PC-3 (cell line): ENCODE measurements at regions of chr1 and their contacts with region 1.

Region 1: GRCh38 chr1:13960375-13960987 is 260.5 kb downstream of the PRDM2 start:
- DNase-seq: peak; percentile 84
- ATAC-seq: peak; percentile 84
- H3K4me3 ChIP-seq: no peak overlapping the region
- H3K27ac ChIP-seq: no peak overlapping the region
- H3K4me1 ChIP-seq: no peaks in the 10 kb centered on the region
- H3K27me3 ChIP-seq: no peaks in the 10 kb centered on the region
- CTCF ChIP-seq: peak; percentile 93

Region 2: DNA sequence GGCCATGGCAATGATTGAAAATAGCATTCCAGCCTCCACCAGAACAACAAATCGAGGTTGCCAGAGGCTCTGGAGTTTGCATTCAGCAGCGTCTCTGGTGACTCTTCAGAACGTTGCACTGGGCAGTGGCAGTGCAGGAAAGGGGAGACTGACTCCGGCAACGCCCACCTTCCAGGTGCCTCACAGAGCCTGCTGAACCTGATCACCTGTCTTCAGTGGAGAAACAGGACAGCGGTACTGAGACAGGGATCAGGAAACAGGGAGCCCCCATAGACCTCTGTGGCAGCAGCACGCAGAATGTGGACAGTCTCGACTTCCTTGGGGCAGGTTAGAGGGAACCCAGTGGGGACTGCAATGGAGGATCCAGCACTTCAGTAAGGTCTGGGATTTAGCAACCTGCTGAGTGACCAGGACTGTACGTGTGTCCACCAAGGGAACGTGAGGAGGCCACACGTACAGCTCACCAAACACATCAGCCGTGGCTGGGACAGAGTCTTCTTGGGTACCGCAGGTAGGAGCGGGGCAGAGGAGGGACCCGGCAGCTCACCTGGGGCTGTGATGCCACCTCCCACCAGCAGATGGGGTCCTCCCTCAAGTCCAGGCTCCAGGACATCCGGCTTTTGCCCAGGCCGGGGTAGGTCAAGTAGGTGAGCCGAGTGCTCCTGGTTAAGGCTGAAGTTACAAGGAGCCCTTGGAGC is 131.9 kb before region 1 on chr1:
- CTCF ChIA-PET with region 1: no interaction called
- POLR2A ChIA-PET with region 1: no interaction called
- intact Hi-C with region 1: loop called (anchors 1 kb)
- DNase-seq: peak; percentile 58
- ATAC-seq: peak; percentile 74
- H3K4me3 ChIP-seq: no peak overlapping the region
- H3K27ac ChIP-seq: no peak overlapping the region
- H3K4me1 ChIP-seq: peaks cover 7% of the 10 kb centered on the region
- H3K27me3 ChIP-seq: no peaks in the 10 kb centered on the region
- CTCF ChIP-seq: peak; percentile 78

Region 3: GRCh38 chr1:14003552-14003951 is 43.1 kb after region 1 on chr1:
- CTCF ChIA-PET with region 1: no interaction called
- POLR2A ChIA-PET with region 1: no interaction called
- intact Hi-C with region 1: no loop called
- DNase-seq: no peak
- ATAC-seq: no peak
- H3K4me3 ChIP-seq: no peak overlapping the region
- H3K27ac ChIP-seq: no peak overlapping the region
- H3K4me1 ChIP-seq: no peaks in the 10 kb centered on the region
- H3K27me3 ChIP-seq: peaks cover 8% of the 10 kb centered on the region; the same call in 1 of the 2 replicates
- CTCF ChIP-seq: no peak

Region 4: GRCh38 chr1:15100121-15100874 is 1139.8 kb after region 1 on chr1:
- CTCF ChIA-PET with region 1: interaction called, 3 read pairs
- POLR2A ChIA-PET with region 1: no interaction called
- intact Hi-C with region 1: loop called (anchors 10 kb)
- DNase-seq: peak; percentile 71
- ATAC-seq: peak; percentile 80
- H3K4me3 ChIP-seq: no peak overlapping the region
- H3K27ac ChIP-seq: no peak overlapping the region
- H3K4me1 ChIP-seq: no peaks in the 10 kb centered on the region
- H3K27me3 ChIP-seq: no peaks in the 10 kb centered on the region
- CTCF ChIP-seq: peak; percentile 92